Calu3 (cell line): ENCODE measurements at regions of chr5 and their contacts with region 1.

Region 1: DNA sequence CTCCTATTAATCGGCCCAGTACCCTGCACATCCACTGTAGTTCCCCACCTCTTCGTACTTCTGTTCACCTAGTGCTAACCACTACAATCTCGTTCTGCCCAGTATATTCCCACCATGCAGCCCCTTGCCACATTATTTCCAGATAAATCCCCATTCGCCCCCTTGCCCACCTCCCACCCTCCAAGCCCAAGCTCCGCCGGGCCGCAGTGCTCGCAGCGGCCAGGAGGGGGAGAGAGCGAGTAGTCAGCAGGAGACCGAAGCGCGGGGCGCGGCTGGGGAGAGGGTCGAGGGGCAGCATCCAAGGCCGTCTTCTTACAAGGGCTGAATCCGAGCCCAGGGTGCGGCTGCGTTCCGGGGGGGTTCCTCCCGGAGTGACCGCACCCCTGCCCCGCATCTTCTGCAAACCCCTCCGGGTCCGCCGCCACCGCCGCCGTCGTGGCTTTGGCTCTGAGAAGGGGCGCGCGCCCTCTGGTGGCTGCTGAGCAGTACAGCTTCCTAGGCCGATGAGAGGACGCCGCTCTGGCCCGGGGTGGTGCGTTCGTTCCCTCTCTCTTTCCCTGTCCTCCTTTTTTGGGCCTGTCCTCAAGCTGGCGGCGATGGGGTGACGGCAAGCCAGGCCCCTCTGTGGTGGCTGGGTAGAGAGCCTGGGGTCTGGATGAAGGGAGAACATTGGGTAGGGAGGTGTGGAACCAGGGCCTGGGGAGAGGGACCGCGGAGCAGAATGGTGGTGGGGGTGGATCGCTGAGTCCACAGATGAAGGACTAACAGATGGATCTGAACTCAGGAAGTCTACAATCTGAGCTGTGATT is 30.0 kb upstream of the PSD2 start:
- DNase-seq: peak; percentile 91
- H3K4me3 Mint-ChIP-seq: peak overlapping the region; percentile 57
- H3K27ac Mint-ChIP-seq: no peak overlapping the region
- H3K4me1 Mint-ChIP-seq: peaks cover 12% of the 10 kb centered on the region
- H3K27me3 Mint-ChIP-seq: peaks cover 9% of the 10 kb centered on the region
- CTCF ChIP-seq: peak; percentile 100

Region 2: GRCh38 chr5:139565411-139566305 is 200.0 kb before region 1 on chr5:
- CTCF ChIA-PET with region 1: no interaction called
- intact Hi-C with region 1: no loop called
- DNase-seq: no peak
- H3K4me3 Mint-ChIP-seq: no peak overlapping the region
- H3K27ac Mint-ChIP-seq: no peak overlapping the region
- H3K4me1 Mint-ChIP-seq: peaks cover 24% of the 10 kb centered on the region
- H3K27me3 Mint-ChIP-seq: no peaks in the 10 kb centered on the region
- CTCF ChIP-seq: no peak

Region 3: DNA sequence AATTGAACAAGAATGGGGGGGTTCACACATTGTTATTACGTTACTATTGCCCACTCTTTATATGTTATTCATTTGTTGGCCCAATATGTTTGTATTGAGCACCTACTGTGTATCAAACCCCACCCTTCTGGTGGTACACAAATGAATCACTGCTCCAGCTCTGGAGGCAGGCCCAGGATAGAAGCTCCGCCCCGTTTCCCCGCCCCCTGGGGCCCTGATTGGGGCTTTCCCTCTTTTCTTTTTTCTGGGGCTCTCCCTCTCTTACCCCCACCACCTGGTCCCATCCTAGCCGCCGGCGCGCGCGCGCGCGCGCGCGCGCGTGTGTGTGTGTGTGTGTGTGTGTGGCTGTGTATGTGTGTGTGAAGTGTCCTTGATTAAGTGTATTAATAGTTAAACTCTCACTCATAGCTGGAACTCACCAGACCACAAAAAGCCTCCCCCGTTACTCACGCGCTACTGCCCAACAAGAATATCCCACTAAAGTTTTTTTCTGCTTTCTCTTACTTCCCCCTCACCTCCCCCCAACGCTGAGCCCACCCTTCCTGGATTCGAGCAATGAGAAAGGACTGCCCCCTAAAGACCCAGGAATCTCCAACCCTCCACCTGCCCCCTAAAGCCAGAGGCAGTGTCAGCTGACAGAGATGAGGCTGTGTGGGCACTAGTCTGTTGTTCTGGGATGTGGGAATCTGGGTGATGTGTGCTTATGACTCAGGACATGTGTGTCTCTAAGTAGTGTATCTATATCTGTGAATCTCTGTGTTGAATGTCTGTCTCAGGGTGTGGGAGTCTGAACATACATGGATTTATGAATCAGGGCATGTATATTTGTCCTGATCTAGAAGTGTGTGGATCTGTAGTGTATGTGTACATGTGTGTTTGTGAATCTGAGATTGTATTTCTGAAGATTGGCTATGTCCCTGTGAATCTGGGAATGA is 113.5 kb before region 1 on chr5:
- CTCF ChIA-PET with region 1: interaction called, 7 read pairs
- intact Hi-C with region 1: loop called (anchors 5 kb)
- DNase-seq: peak; percentile 94
- H3K4me3 Mint-ChIP-seq: peak overlapping the region; percentile 99
- H3K27ac Mint-ChIP-seq: peak overlapping the region; percentile 32
- H3K4me1 Mint-ChIP-seq: peaks cover 67% of the 10 kb centered on the region
- H3K27me3 Mint-ChIP-seq: no peaks in the 10 kb centered on the region
- CTCF ChIP-seq: no peak

Region 4: DNA sequence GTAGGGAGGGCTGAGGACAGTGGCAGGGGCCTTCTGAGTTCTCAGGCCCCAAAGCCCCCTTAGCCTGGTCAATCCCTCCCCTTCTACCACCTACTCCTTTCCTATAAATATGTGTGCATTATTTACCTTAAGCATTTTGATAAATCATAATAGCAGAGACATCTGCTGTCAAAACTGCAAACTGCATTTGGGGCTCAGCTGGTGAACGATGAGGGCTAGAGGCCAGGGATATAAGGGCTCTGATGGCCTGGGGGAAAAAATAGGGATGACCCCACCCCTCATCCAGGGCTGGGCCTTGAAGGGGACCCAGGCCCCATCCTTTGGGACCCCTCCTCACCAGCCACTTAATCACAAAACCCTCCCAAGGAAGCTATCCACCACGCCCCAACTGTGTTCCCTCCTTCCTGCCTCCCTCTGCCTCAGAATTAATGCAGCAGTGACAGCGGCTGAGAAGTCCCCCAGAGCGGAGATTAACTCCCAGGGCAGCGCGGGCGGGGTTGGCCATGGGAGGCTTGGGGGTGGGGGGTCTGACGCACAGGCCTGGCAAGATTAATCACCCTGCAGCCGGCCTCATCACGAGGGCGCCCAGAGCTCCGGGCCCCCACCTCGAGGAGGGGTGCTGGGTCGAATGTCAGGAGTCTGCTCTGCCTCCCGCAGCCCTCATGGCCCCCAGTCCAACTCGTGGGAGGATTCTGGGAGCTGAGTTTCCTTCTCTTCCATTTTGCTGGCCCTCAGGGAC is 75.4 kb before region 1 on chr5:
- CTCF ChIA-PET with region 1: interaction called, 11 read pairs
- intact Hi-C with region 1: loop called (anchors 5 kb)
- DNase-seq: peak; percentile 52
- H3K4me3 Mint-ChIP-seq: no peak overlapping the region
- H3K27ac Mint-ChIP-seq: peak overlapping the region; percentile 6
- H3K4me1 Mint-ChIP-seq: peaks cover 15% of the 10 kb centered on the region
- H3K27me3 Mint-ChIP-seq: no peaks in the 10 kb centered on the region
- CTCF ChIP-seq: peak; percentile 52

Region 5: GRCh38 chr5:139696894-139697658 is 68.5 kb before region 1 on chr5:
- CTCF ChIA-PET with region 1: interaction called, 5 read pairs
- intact Hi-C with region 1: loop called (anchors 5 kb)
- DNase-seq: peak; percentile 69
- H3K4me3 Mint-ChIP-seq: peak overlapping the region; percentile 63
- H3K27ac Mint-ChIP-seq: peak overlapping the region; percentile 72
- H3K4me1 Mint-ChIP-seq: peaks cover 44% of the 10 kb centered on the region
- H3K27me3 Mint-ChIP-seq: no peaks in the 10 kb centered on the region
- CTCF ChIP-seq: no peak

Region 6: GRCh38 chr5:139739150-139739974 is 26.3 kb before region 1 on chr5:
- CTCF ChIA-PET with region 1: no interaction called
- intact Hi-C with region 1: no loop called
- DNase-seq: no peak
- H3K4me3 Mint-ChIP-seq: no peak overlapping the region
- H3K27ac Mint-ChIP-seq: no peak overlapping the region
- H3K4me1 Mint-ChIP-seq: peaks cover 4% of the 10 kb centered on the region
- H3K27me3 Mint-ChIP-seq: no peaks in the 10 kb centered on the region
- CTCF ChIP-seq: no peak

Region 7: GRCh38 chr5:139752506-139753473 is 12.8 kb before region 1 on chr5:
- CTCF ChIA-PET with region 1: interaction called, 10 read pairs
- intact Hi-C with region 1: no loop called
- DNase-seq: no peak
- H3K4me3 Mint-ChIP-seq: no peak overlapping the region
- H3K27ac Mint-ChIP-seq: no peak overlapping the region
- H3K4me1 Mint-ChIP-seq: peaks cover 37% of the 10 kb centered on the region
- H3K27me3 Mint-ChIP-seq: peaks cover 71% of the 10 kb centered on the region
- CTCF ChIP-seq: no peak

Region 8: GRCh38 chr5:140141241-140141640 is 375.6 kb after region 1 on chr5:
- CTCF ChIA-PET with region 1: no interaction called
- intact Hi-C with region 1: no loop called
- DNase-seq: no peak
- H3K4me3 Mint-ChIP-seq: no peak overlapping the region
- H3K27ac Mint-ChIP-seq: no peak overlapping the region
- H3K4me1 Mint-ChIP-seq: peaks cover 15% of the 10 kb centered on the region
- H3K27me3 Mint-ChIP-seq: peaks cover 30% of the 10 kb centered on the region
- CTCF ChIP-seq: no peak